ENCODE measurements at regions of chr17 and their contacts with region 1.

Region 1: DNA sequence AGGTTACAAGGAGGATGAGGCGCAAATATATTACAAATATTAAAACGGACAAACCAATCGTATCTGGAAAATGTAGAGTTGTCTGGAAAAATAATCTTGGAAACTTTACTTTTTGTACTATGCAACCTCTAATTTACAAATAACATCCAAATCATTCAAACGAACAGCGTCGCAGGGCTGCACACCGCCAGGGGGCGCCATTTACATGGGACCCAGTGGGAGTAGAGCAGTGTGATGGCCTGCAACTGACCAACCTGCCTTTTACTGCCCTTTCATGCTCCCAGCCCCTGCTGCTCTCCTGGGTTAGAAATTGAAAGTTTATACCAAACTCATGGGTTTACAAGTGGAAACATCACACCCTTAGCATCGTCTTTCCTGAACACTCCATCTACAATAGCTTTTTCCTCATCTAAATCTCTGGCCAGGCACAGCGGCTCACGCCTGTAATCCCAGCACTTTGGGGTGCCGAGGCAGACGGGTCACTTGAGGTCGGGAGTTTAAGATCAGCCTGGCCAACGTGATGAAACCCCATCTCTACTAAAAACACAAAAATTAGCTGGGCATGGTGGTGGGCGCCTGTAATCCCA is 10.0 kb downstream of the PITPNC1 start:
- DNase-seq: peak in 1 of 2 donors; percentile 62
- ATAC-seq: peak in 1 of 8 donors; percentile 34
- H3K4me3 ChIP-seq: no peak overlapping the region
- H3K27ac ChIP-seq: peak overlapping the region in 2 of 10 donors; percentile 11 to 32
- H3K4me1 ChIP-seq: peaks cover 0 to 54% (median 24%) of the 10 kb centered on the region in 9 donors
- H3K27me3 ChIP-seq: no peaks in the 10 kb centered on the region
- CTCF ChIP-seq: peak; percentile 35 to 74 (median 60)

Region 2: DNA sequence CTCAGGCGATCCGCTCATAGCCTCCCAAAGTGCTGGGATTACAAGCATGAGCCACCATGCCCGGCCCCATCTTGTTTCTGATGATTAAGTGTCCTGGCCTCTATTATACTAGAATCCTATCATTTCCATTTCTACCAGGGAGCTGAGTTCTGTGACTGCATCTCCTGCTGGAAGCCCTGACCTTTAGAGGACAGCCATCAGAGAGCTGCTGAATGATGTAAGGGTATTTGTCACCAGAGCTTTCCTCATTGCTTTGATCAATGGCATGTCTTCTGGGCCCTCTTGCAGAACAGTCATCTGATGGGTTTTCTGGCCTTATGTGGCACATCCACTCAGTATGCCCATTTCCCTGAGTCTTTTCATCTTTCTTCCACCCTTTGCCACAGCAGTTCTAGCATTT is 60.6 kb before region 1 on chr17:
- intact Hi-C with region 1: no loop called
- DNase-seq: no peak
- ATAC-seq: no peak
- H3K4me3 ChIP-seq: no peak overlapping the region
- H3K27ac ChIP-seq: no peak overlapping the region
- H3K4me1 ChIP-seq: no peaks in the 10 kb centered on the region
- H3K27me3 ChIP-seq: no peaks in the 10 kb centered on the region
- CTCF ChIP-seq: no peak

Region 3: GRCh38 chr17:67336859-67337258 is 50.2 kb before region 1 on chr17:
- intact Hi-C with region 1: no loop called
- DNase-seq: no peak
- ATAC-seq: no peak
- H3K4me3 ChIP-seq: no peak overlapping the region
- H3K27ac ChIP-seq: no peak overlapping the region
- H3K4me1 ChIP-seq: no peaks in the 10 kb centered on the region
- H3K27me3 ChIP-seq: no peaks in the 10 kb centered on the region
- CTCF ChIP-seq: no peak

Region 4: DNA sequence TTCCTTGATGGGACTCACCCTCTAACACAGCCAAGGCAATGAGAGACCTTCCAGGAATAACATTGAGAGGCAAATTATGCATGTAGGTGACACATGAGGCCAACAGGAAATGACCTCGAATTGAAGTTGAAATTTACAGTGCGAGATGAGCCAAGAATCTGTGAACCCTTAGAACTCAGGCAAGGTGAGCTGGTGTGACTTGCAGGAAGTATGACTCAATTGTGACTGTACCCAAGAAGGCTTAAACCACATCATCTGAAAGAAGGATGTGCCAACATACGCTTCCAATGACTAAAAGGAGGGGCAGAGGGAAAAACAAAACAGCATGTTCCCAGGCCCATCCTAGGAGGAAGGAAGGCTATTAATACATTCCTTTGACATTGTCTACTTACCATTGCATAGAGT is 34.8 kb after region 1 on chr17:
- intact Hi-C with region 1: loop called in 2 of 10 experiments (anchors 5 kb)
- DNase-seq: peak in 1 of 2 donors; percentile 21
- ATAC-seq: peak; percentile 61 to 94 (median 87)
- H3K4me3 ChIP-seq: no peak overlapping the region
- H3K27ac ChIP-seq: peak overlapping the region; percentile 38 to 83 (median 68)
- H3K4me1 ChIP-seq: peaks cover 0 to 47% (median 9%) of the 10 kb centered on the region in 9 donors
- H3K27me3 ChIP-seq: no peaks in the 10 kb centered on the region
- CTCF ChIP-seq: no peak

Region 5: GRCh38 chr17:67431249-67432048 is 44.4 kb after region 1 on chr17:
- intact Hi-C with region 1: loop called in 1 of 10 experiments (anchors 5 kb)
- DNase-seq: no peak
- ATAC-seq: peak in 2 of 8 donors; percentile 14 to 34
- H3K4me3 ChIP-seq: no peak overlapping the region
- H3K27ac ChIP-seq: peak overlapping the region in 7 of 10 donors; percentile 27 to 60 (median 42)
- H3K4me1 ChIP-seq: peaks cover 4 to 59% (median 34%) of the 10 kb centered on the region in 9 donors
- H3K27me3 ChIP-seq: no peaks in the 10 kb centered on the region
- CTCF ChIP-seq: no peak